ENCODE measurements at regions of chr14 and their contacts with region 1.

Region 1: DNA sequence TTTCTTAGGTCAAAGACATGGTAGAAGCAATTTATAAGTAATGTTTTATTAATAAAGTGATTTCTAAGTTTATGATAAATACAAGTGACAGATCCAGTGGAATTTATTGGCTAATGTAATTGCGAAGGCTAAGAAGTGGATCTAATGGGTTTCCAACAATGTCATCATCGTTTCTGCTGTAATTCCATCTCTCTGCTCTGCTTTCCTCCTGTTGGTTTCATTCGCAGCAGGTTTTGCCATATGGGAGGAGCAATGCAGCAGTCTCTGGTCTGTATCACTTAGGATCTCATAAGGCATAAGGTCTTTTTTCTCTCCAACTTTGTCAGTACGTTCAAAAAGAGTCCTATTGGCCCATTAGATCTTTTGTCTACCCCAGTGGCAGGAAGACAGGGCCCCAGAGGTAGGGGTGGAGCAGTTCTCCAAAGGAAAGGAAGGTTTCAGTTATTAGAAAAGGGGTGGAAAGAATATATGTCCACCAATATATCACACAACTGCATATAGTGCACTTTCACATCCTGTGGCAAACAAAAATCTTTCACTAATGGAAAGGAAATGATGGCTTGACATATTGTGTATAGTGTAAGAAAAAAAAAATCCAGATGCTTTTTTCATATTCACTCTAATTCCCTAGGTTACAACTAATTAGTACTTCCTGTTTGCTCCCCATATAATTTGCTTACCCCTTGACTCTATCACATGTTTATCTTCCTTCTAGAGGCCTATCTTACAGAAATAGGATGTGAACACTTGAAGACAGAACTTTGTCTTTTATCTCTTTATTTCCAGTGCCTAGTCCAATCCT is 451.3 kb downstream of the ZFP36L1 start:
- DNase-seq: no peak
- ATAC-seq: peak; percentile 34
- H3K4me3 Mint-ChIP-seq: no peak overlapping the region
- H3K27ac Mint-ChIP-seq: peak overlapping the region; percentile 59
- H3K4me1 Mint-ChIP-seq: peaks cover 67% of the 10 kb centered on the region
- H3K27me3 Mint-ChIP-seq: no peaks in the 10 kb centered on the region
- CTCF ChIP-seq: no peak

Region 2: GRCh38 chr14:67571272-67571850 is 770.3 kb before region 1 on chr14:
- CTCF ChIA-PET with region 1: no interaction called
- POLR2A ChIA-PET with region 1: no interaction called
- intact Hi-C with region 1: no loop called
- DNase-seq: peak; percentile 55
- ATAC-seq: peak; percentile 86
- H3K4me3 Mint-ChIP-seq: no peak overlapping the region
- H3K27ac Mint-ChIP-seq: no peak overlapping the region
- H3K4me1 Mint-ChIP-seq: peaks cover 3% of the 10 kb centered on the region
- H3K27me3 Mint-ChIP-seq: peaks cover 8% of the 10 kb centered on the region
- CTCF ChIP-seq: no peak

Region 3: GRCh38 chr14:68322940-68323620 is 18.5 kb before region 1 on chr14:
- CTCF ChIA-PET with region 1: no interaction called
- POLR2A ChIA-PET with region 1: no interaction called
- intact Hi-C with region 1: loop called (anchors 2 kb)
- DNase-seq: no peak
- ATAC-seq: no peak
- H3K4me3 Mint-ChIP-seq: no peak overlapping the region
- H3K27ac Mint-ChIP-seq: no peak overlapping the region
- H3K4me1 Mint-ChIP-seq: peaks cover 74% of the 10 kb centered on the region
- H3K27me3 Mint-ChIP-seq: no peaks in the 10 kb centered on the region
- CTCF ChIP-seq: no peak

Region 4: GRCh38 chr14:68328509-68328908 is 13.1 kb before region 1 on chr14:
- CTCF ChIA-PET with region 1: no interaction called
- POLR2A ChIA-PET with region 1: no interaction called
- intact Hi-C with region 1: loop called (anchors 1 kb)
- DNase-seq: no peak
- ATAC-seq: no peak
- H3K4me3 Mint-ChIP-seq: no peak overlapping the region
- H3K27ac Mint-ChIP-seq: peak overlapping the region; percentile 13
- H3K4me1 Mint-ChIP-seq: peaks cover 63% of the 10 kb centered on the region
- H3K27me3 Mint-ChIP-seq: no peaks in the 10 kb centered on the region
- CTCF ChIP-seq: no peak